ENCODE measurements at regions of chr7 and their contacts with region 1.

Region 1: GRCh38 chr7:111089822-111090426 is 1.0 kb upstream of the LRRN3 start:
- DNase-seq: no peak
- H3K4me3 ChIP-seq: no peak overlapping the region
- H3K27ac ChIP-seq: no peak overlapping the region
- H3K4me1 ChIP-seq: no peaks in the 10 kb centered on the region
- H3K27me3 ChIP-seq: no peaks in the 10 kb centered on the region
- CTCF ChIP-seq: peak; percentile 78

Region 2: DNA sequence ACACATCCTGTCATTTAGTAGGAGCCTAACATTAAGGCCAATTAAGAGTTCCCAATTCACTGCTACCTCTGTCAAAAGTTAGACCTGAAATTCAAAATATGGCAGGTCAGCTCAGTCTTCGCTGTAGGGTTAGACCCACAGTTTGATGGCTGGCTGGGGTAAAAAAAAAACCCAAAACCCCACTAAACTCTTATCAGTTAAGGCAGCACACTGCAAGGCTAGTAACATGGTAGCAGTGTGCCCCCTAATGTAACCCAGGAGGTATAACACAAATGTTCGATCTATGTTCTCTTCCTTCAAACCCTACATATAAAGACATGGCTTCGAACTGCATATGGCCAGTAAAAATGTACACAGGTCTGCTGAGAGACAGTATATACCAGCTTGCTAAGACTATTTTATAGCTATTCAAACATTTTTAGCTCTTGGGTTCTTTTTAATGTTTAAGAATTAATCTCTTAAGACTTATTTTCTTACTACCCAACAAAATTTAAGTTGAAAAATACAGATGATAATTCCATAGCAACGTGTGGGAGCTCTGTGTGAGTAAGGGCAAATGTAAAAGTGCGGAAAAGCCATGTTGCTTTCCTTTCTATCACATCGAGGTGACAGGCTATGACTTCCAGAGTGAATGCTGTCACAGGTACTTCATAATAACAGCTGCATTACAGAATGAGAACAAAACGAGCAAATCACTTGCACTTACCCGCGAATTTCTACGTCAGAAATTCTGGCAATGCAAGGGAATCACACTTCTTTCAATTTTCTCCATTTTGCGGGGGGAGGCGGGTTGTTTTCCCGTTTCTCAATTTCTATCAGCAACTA is 640.8 kb after region 1 on chr7:
- intact Hi-C with region 1: loop called (anchors 5 kb)
- DNase-seq: no peak
- H3K4me3 ChIP-seq: no peak overlapping the region
- H3K27ac ChIP-seq: no peak overlapping the region
- H3K4me1 ChIP-seq: no peaks in the 10 kb centered on the region
- H3K27me3 ChIP-seq: no peaks in the 10 kb centered on the region
- CTCF ChIP-seq: peak; percentile 16